ENCODE measurements at regions of chr1 and their contacts with region 1.

Region 1: GRCh38 chr1:2091611-2092604 is 41.7 kb downstream of the PRKCZ start:
- DNase-seq: peak in 1 of 2 donors; percentile 55
- ATAC-seq: peak in 2 of 8 donors; percentile 43 to 45
- H3K4me3 ChIP-seq: no peak overlapping the region
- H3K27ac ChIP-seq: no peak overlapping the region
- H3K4me1 ChIP-seq: peaks cover 0 to 10% (median 0%) of the 10 kb centered on the region in 9 donors
- H3K27me3 ChIP-seq: peaks cover 0 to 7% (median 0%) of the 10 kb centered on the region in 7 donors
- CTCF ChIP-seq: peak; percentile 31 to 72 (median 60)

Region 2: GRCh38 chr1:1899266-1899966 is 192.5 kb before region 1 on chr1:
- intact Hi-C with region 1: no loop called
- DNase-seq: no peak
- ATAC-seq: no peak
- H3K4me3 ChIP-seq: no peak overlapping the region
- H3K27ac ChIP-seq: no peak overlapping the region
- H3K4me1 ChIP-seq: peaks cover 9 to 14% (median 11%) of the 10 kb centered on the region in 9 donors
- H3K27me3 ChIP-seq: no peaks in the 10 kb centered on the region
- CTCF ChIP-seq: no peak

Region 3: DNA sequence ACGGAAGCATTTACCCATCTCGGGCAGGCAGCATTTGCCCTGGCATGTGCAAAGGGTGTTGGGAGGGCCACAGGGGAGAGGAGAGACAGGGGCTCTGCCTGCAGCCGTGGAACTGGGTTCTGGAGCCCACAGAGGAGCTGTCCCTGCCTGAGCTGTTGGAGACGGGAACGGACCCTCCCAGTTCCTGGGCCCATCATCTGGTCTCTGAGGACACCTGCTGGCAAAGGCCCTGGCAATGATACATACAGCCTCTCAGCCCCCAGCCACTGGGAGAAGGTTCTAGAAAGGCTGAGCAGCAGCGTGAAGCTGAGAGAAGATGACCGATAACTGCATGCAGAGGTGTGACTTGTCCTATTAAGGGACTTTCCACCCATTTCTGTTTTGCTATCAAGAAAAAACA is 71.3 kb after region 1 on chr1:
- intact Hi-C with region 1: loop called in 2 of 10 experiments (anchors 10 kb)
- DNase-seq: no peak
- ATAC-seq: no peak
- H3K4me3 ChIP-seq: no peak overlapping the region
- H3K27ac ChIP-seq: no peak overlapping the region
- H3K4me1 ChIP-seq: peaks cover 0 to 4% (median 0%) of the 10 kb centered on the region in 9 donors
- H3K27me3 ChIP-seq: no peaks in the 10 kb centered on the region
- CTCF ChIP-seq: peak in 4 of 9 donors; percentile 12 to 26 (median 16)

Region 4: GRCh38 chr1:2174348-2175054 is 82.6 kb after region 1 on chr1:
- intact Hi-C with region 1: loop called in 4 of 10 experiments (anchors 5 to 10 kb)
- DNase-seq: peak in 1 of 2 donors; percentile 65
- ATAC-seq: peak; percentile 68 to 87 (median 76)
- H3K4me3 ChIP-seq: peak overlapping the region in 9 of 10 donors; percentile 25 to 57 (median 44)
- H3K27ac ChIP-seq: peak overlapping the region in 2 of 10 donors; percentile 26 to 36
- H3K4me1 ChIP-seq: peaks cover 0 to 14% (median 5%) of the 10 kb centered on the region in 9 donors
- H3K27me3 ChIP-seq: no peaks in the 10 kb centered on the region
- CTCF ChIP-seq: peak; percentile 67 to 95 (median 91)

Region 5: GRCh38 chr1:2949966-2950925 is 858.3 kb after region 1 on chr1:
- intact Hi-C with region 1: no loop called
- DNase-seq: no peak
- ATAC-seq: no peak
- H3K4me3 ChIP-seq: no peak overlapping the region
- H3K27ac ChIP-seq: no peak overlapping the region
- H3K4me1 ChIP-seq: peaks cover 0 to 10% (median 0%) of the 10 kb centered on the region in 9 donors
- H3K27me3 ChIP-seq: peaks cover 0 to 16% (median 11%) of the 10 kb centered on the region in 7 donors
- CTCF ChIP-seq: no peak